Caco-2 (cell line): ENCODE measurements at regions of chr10 and their contacts with region 1.

Region 1: DNA sequence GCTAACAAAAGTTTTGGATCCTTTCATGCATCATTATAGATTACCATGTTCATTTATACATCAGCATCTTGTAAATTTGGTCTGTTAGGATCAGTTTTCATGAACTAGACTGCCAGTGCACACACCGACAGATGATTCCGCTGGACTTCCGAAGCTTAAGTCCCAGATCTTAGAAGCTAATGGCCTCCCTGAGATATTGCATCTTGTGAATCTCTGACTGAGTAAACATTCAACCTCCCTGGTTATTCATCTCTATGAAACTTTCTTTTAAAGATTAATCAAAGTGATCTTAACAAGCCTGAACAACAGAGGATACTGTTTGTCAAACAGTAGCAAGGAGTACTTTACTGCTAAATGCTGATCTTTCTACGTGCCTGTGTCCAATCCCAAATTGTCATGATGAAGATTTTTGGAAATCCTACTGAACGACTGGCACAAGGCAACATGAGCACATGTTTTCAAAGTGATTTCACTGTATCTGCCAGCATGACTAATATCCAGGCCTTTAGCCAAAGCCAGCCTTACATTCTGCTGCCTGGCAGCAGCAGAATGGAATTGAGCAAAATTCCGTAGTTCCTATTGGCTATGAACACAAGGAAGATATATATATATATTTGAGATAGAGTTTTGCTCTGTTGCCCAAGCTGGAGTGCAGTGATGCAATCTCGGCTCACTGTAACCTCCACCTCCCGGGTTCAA is 91.3 kb upstream of the ANK3 start:
- DNase-seq: no peak
- H3K4me3 ChIP-seq: no peak overlapping the region
- H3K4me3 Mint-ChIP-seq: no peak overlapping the region
- H3K27ac Mint-ChIP-seq: no peak overlapping the region
- H3K4me1 ChIP-seq: peaks cover 56% of the 10 kb centered on the region
- H3K4me1 Mint-ChIP-seq: peaks cover 42% of the 10 kb centered on the region
- H3K27me3 ChIP-seq: no peaks in the 10 kb centered on the region
- H3K27me3 Mint-ChIP-seq: no peaks in the 10 kb centered on the region
- CTCF ChIP-seq: no peak

Region 2: DNA sequence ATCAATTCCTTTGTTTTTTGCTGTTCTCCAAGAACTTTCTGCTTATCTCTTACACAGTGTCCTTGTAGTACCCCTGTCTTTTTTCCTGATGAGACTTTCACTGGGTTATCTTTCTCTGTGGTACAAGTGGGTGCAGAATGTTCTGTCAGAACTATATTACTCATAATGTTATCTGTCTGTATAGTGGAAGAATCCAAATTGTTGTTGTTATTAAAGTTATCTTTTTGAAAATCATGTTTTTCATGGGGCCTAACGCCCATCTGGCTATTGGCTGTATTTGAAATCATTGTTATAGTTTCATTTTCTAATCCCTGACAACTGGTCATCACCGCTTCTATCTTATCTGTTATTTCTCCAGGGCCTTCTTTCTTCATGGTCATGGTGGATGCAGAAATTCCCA is 411.7 kb before region 1 on chr10:
- CTCF ChIA-PET with region 1: no interaction called
- POLR2A ChIA-PET with region 1: no interaction called
- intact Hi-C with region 1: no loop called
- DNase-seq: no peak
- H3K4me3 ChIP-seq: no peak overlapping the region
- H3K4me3 Mint-ChIP-seq: no peak overlapping the region
- H3K27ac Mint-ChIP-seq: no peak overlapping the region
- H3K4me1 ChIP-seq: peaks cover 4% of the 10 kb centered on the region; the same call in 1 of the 2 replicates
- H3K4me1 Mint-ChIP-seq: peaks cover 7% of the 10 kb centered on the region
- H3K27me3 ChIP-seq: no peaks in the 10 kb centered on the region
- H3K27me3 Mint-ChIP-seq: no peaks in the 10 kb centered on the region
- CTCF ChIP-seq: no peak

Region 3: DNA sequence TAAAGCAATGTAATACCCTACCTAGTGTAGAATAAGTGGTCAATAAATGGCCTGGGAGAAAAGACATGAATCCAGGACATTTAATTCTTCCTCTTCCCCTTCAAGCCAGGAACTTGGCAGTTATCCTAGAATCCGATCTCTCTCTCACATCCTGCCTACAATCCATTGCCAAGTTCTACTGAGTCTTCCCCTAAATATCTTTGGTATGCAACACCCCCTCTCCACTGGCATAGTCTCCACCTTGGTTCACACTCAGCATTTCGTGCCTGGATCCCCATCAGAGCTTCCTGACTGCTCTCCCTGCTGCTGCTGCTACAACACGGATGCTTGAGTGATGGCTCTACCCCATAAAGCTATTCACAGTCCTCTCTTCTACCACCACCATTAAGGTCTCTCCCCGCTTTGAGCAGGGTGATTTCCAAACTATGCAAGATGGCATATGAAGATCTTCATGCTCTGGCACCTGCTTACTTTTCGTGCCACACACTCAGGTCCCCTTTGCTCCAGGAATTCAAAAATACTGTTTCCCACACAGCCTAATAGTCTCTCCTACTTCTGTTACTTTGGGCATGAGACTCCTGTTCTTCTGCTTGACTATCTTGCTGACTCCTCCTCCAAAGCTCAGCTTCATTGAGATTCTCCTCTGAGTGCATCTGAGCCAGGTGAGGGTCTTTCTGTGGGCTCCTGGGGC is 96.2 kb before region 1 on chr10:
- CTCF ChIA-PET with region 1: no interaction called
- POLR2A ChIA-PET with region 1: no interaction called
- intact Hi-C with region 1: no loop called
- DNase-seq: no peak
- H3K4me3 ChIP-seq: no peak overlapping the region
- H3K4me3 Mint-ChIP-seq: no peak overlapping the region
- H3K27ac Mint-ChIP-seq: no peak overlapping the region
- H3K4me1 ChIP-seq: no peaks in the 10 kb centered on the region
- H3K4me1 Mint-ChIP-seq: peaks cover 7% of the 10 kb centered on the region
- H3K27me3 ChIP-seq: no peaks in the 10 kb centered on the region
- H3K27me3 Mint-ChIP-seq: no peaks in the 10 kb centered on the region
- CTCF ChIP-seq: no peak

Region 4: DNA sequence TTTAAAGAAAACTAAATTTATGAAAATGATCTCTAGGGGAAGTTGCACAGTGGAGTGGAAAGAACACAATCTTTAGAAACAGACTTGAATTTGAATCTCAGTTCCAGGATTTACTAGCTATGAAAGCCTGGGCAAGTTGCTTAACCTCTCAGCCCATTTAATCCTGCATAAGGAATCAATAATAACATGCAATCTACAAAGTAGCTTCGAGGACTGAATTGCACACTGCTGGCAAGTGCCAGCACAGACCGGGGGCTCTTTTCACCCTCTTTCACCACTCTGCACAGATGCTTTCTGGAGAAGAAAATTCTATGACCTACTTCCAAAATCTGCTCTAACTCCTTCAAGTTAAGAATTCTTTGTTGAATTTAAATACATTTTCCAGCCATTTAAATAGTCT is 28.0 kb before region 1 on chr10:
- CTCF ChIA-PET with region 1: no interaction called
- POLR2A ChIA-PET with region 1: no interaction called
- intact Hi-C with region 1: no loop called
- DNase-seq: no peak
- H3K4me3 ChIP-seq: no peak overlapping the region
- H3K4me3 Mint-ChIP-seq: no peak overlapping the region
- H3K27ac Mint-ChIP-seq: no peak overlapping the region
- H3K4me1 ChIP-seq: no peaks in the 10 kb centered on the region
- H3K4me1 Mint-ChIP-seq: peaks cover 5% of the 10 kb centered on the region
- H3K27me3 ChIP-seq: no peaks in the 10 kb centered on the region
- H3K27me3 Mint-ChIP-seq: no peaks in the 10 kb centered on the region
- CTCF ChIP-seq: no peak

Region 5: DNA sequence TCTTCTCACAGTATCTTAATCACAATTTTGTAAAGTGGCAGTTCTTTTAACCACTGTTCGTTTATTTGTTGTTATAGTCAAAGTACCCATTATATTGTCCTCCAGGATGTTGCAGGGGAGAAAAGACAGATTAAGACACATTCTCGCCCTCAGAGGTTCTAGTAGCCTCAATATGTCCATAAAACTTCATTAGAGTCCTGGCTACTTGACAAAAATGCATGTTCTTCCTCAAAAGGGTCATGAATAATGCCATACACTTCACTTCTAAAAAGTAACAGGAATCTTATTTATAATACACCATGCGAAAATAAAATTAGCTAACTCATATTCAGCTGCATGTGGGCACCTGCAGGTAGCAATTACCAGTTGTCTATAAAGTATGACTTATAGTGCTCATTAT is 18.0 kb after region 1 on chr10:
- CTCF ChIA-PET with region 1: no interaction called
- POLR2A ChIA-PET with region 1: no interaction called
- intact Hi-C with region 1: loop called (anchors 1 kb)
- DNase-seq: no peak
- H3K4me3 ChIP-seq: no peak overlapping the region
- H3K4me3 Mint-ChIP-seq: no peak overlapping the region
- H3K27ac Mint-ChIP-seq: no peak overlapping the region
- H3K4me1 ChIP-seq: peaks cover 3% of the 10 kb centered on the region; the same call in 1 of the 2 replicates
- H3K4me1 Mint-ChIP-seq: peaks cover 14% of the 10 kb centered on the region
- H3K27me3 ChIP-seq: no peaks in the 10 kb centered on the region
- H3K27me3 Mint-ChIP-seq: no peaks in the 10 kb centered on the region
- CTCF ChIP-seq: no peak

Region 6: GRCh38 chr10:60536529-60537114 is 55.6 kb after region 1 on chr10:
- CTCF ChIA-PET with region 1: no interaction called
- POLR2A ChIA-PET with region 1: no interaction called
- intact Hi-C with region 1: no loop called
- DNase-seq: no peak
- H3K4me3 ChIP-seq: no peak overlapping the region
- H3K4me3 Mint-ChIP-seq: no peak overlapping the region
- H3K27ac Mint-ChIP-seq: no peak overlapping the region
- H3K4me1 ChIP-seq: no peaks in the 10 kb centered on the region
- H3K4me1 Mint-ChIP-seq: peaks cover 6% of the 10 kb centered on the region
- H3K27me3 ChIP-seq: no peaks in the 10 kb centered on the region
- H3K27me3 Mint-ChIP-seq: no peaks in the 10 kb centered on the region
- CTCF ChIP-seq: no peak